ENCODE measurements at regions of chr2 and their contacts with region 1.

Region 1: DNA sequence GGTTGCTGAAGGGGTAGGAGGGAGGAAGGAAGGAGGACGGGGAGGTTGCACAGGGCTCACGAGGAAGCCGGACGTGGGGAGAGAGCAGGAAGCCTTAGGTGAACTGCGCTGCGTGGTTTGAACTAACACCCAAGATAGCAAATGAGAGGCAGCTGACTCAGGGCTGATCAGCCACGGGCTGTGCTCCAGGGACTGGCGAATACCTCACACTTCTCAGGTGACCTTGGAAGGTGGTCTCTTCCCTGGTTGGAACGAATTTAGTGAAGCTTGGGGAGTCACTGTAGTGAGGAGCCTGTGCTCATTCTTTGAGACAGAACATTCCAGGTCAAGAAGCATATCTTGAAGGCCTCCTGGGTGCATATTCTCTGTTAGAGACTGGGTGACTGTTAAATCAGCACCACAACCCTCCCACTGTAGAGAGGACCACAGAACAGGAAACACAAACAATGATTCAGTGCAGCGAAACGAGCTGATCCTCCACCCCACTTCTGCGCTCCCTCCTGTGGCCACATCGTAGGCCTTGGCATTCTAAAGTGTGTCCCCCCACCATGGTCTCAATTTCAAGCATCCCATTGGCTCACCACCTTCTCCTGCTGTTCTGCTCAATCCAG is 33.8 kb downstream of the TOGARAM2 start:
- DNase-seq: peak; percentile 50 to 70 (median 60)
- H3K4me3 ChIP-seq: peak overlapping the region in 1 of 3 experiments; percentile 63
- H3K4me3 Mint-ChIP-seq: peak overlapping the region; percentile 47 to 53
- H3K27ac ChIP-seq: peak overlapping the region; percentile 39 to 63
- H3K27ac Mint-ChIP-seq: peak overlapping the region; percentile 74 to 91 (median 80)
- H3K4me1 ChIP-seq: peaks cover 51 to 63% of the 10 kb centered on the region in 2 donors
- H3K4me1 Mint-ChIP-seq: peaks cover 66% of the 10 kb centered on the region
- H3K27me3 ChIP-seq: peaks cover 0 to 2% of the 10 kb centered on the region in 2 donors
- H3K27me3 Mint-ChIP-seq: peaks cover 9 to 23% (median 12%) of the 10 kb centered on the region in 3 donors
- CTCF ChIP-seq: peak; percentile 33

Region 2: GRCh38 chr2:28958689-28959088 is 56.2 kb before region 1 on chr2:
- intact Hi-C with region 1: loop called in 1 of 2 experiments (anchors 10 kb)
- DNase-seq: peak; percentile 30 to 81 (median 56)
- H3K4me3 ChIP-seq: no peak overlapping the region
- H3K4me3 Mint-ChIP-seq: no peak overlapping the region
- H3K27ac ChIP-seq: no peak overlapping the region
- H3K27ac Mint-ChIP-seq: peak overlapping the region in 1 of 7 donors; percentile 80
- H3K4me1 ChIP-seq: peaks cover 11 to 18% of the 10 kb centered on the region in 2 donors
- H3K4me1 Mint-ChIP-seq: peaks cover 22% of the 10 kb centered on the region
- H3K27me3 ChIP-seq: no peaks in the 10 kb centered on the region
- H3K27me3 Mint-ChIP-seq: peaks cover 0 to 3% (median 2%) of the 10 kb centered on the region in 3 donors
- CTCF ChIP-seq: peak; percentile 79

Region 3: DNA sequence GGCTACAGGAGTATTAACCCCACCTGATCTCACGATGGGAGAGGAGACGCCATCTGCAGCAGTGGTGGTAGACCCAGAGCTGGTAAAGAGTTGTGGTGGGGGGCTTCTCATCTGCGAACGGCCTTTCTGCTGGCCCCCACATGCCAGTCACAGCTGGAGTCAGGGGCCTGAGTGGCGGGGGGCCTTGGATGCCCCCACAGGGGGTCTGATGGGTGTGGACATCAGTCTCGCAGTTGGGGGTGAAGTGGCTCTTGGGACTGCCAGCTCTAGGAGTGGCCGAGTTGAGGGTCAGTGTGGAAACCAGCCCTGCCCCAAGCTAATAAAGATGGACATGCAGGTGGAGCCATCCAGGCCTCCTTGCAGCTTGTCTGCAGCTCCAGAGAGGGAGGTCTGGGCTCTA is 27.2 kb before region 1 on chr2:
- intact Hi-C with region 1: loop called in 1 of 2 experiments (anchors 1 kb)
- DNase-seq: no peak
- H3K4me3 ChIP-seq: no peak overlapping the region
- H3K4me3 Mint-ChIP-seq: no peak overlapping the region
- H3K27ac ChIP-seq: no peak overlapping the region
- H3K27ac Mint-ChIP-seq: peak overlapping the region in 1 of 7 donors; percentile 26
- H3K4me1 ChIP-seq: no peaks in the 10 kb centered on the region
- H3K4me1 Mint-ChIP-seq: peaks cover 5% of the 10 kb centered on the region
- H3K27me3 ChIP-seq: no peaks in the 10 kb centered on the region
- H3K27me3 Mint-ChIP-seq: peaks cover 0 to 7% (median 2%) of the 10 kb centered on the region in 3 donors
- CTCF ChIP-seq: no peak

Region 4: GRCh38 chr2:29115797-29116781 is 101.2 kb after region 1 on chr2:
- intact Hi-C with region 1: loop called in 1 of 2 experiments (anchors 10 kb)
- DNase-seq: peak; percentile 80 to 85 (median 82)
- H3K4me3 ChIP-seq: peak overlapping the region; percentile 65 to 90 (median 74)
- H3K4me3 Mint-ChIP-seq: peak overlapping the region; percentile 88 to 91
- H3K27ac ChIP-seq: peak overlapping the region; percentile 91
- H3K27ac Mint-ChIP-seq: peak overlapping the region; percentile 94 to 97 (median 96)
- H3K4me1 ChIP-seq: peaks cover 31 to 46% of the 10 kb centered on the region in 2 donors
- H3K4me1 Mint-ChIP-seq: peaks cover 44% of the 10 kb centered on the region
- H3K27me3 ChIP-seq: no peaks in the 10 kb centered on the region
- H3K27me3 Mint-ChIP-seq: peaks cover 0 to 11% (median 0%) of the 10 kb centered on the region in 3 donors
- CTCF ChIP-seq: no peak

Region 5: GRCh38 chr2:29309090-29310029 is 294.4 kb after region 1 on chr2:
- intact Hi-C with region 1: no loop called
- DNase-seq: peak; percentile 63 to 81 (median 72)
- H3K4me3 ChIP-seq: no peak overlapping the region
- H3K4me3 Mint-ChIP-seq: no peak overlapping the region
- H3K27ac ChIP-seq: no peak overlapping the region
- H3K27ac Mint-ChIP-seq: no peak overlapping the region
- H3K4me1 ChIP-seq: peaks cover 8 to 12% of the 10 kb centered on the region in 2 donors
- H3K4me1 Mint-ChIP-seq: peaks cover 22% of the 10 kb centered on the region
- H3K27me3 ChIP-seq: peaks cover 4 to 8% of the 10 kb centered on the region in 2 donors
- H3K27me3 Mint-ChIP-seq: peaks cover 16 to 27% (median 24%) of the 10 kb centered on the region in 3 donors
- CTCF ChIP-seq: peak; percentile 88

Measured in CD14-positive monocyte (primary cell).